K562 (cell line): ENCODE measurements at regions of chr6 and their contacts with region 1.

Region 1: GRCh38 chr6:3638662-3639061 is 112.9 kb downstream of the PXDC1 start:
- DNase-seq: no peak
- ATAC-seq: no peak
- H3K4me3 ChIP-seq: no peak overlapping the region
- H3K27ac ChIP-seq: no peak overlapping the region
- H3K4me1 ChIP-seq: no peaks in the 10 kb centered on the region; a peak in 1 of 5 replicates
- H3K27me3 ChIP-seq: peaks cover 3 to 8% of the 10 kb centered on the region in 2 experiments; a peak in 4 of 5 replicates
- CTCF ChIP-seq: no peak
- EP300 ChIP-seq: no peak
- POLR2A ChIP-seq: no peak
- RAD21 ChIP-seq: no peak

Region 2: GRCh38 chr6:3650959-3651697 is 12.5 kb after region 1 on chr6:
- CTCF ChIA-PET with region 1: no interaction called
- POLR2A ChIA-PET with region 1: interaction called, 10 read pairs
- in situ Hi-C with region 1: no loop called
- intact Hi-C with region 1: no loop called
- DNase-seq: peak; percentile 66 to 96 (median 80)
- ATAC-seq: peak; percentile 96
- H3K4me3 ChIP-seq: peak overlapping the region; percentile 1; the same call in 1 of the 2 replicates
- H3K27ac ChIP-seq: peak overlapping the region; percentile 88
- H3K4me1 ChIP-seq: peaks cover 21 to 26% of the 10 kb centered on the region in 2 experiments
- H3K27me3 ChIP-seq: no peaks in the 10 kb centered on the region
- CTCF ChIP-seq: no peak
- EP300 ChIP-seq: peak; percentile 94
- POLR2A ChIP-seq: peak; percentile 46; the same call in 1 of the 2 replicates
- RAD21 ChIP-seq: no peak; a peak in 1 of 4 replicates

Region 3: GRCh38 chr6:3712827-3713665 is 74.4 kb after region 1 on chr6:
- CTCF ChIA-PET with region 1: no interaction called
- POLR2A ChIA-PET with region 1: no interaction called
- in situ Hi-C with region 1: no loop called
- intact Hi-C with region 1: no loop called
- DNase-seq: no peak
- ATAC-seq: no peak
- H3K4me3 ChIP-seq: no peak overlapping the region
- H3K27ac ChIP-seq: no peak overlapping the region
- H3K4me1 ChIP-seq: peaks cover 0 to under 1% of the 10 kb centered on the region in 2 experiments; a peak in 2 of 5 replicates
- H3K27me3 ChIP-seq: peaks cover 24 to 49% of the 10 kb centered on the region in 2 experiments; a peak in 4 of 5 replicates
- CTCF ChIP-seq: no peak
- EP300 ChIP-seq: no peak
- POLR2A ChIP-seq: no peak
- RAD21 ChIP-seq: no peak

Region 4: GRCh38 chr6:3794092-3794491 is 155.4 kb after region 1 on chr6:
- CTCF ChIA-PET with region 1: no interaction called
- POLR2A ChIA-PET with region 1: no interaction called
- in situ Hi-C with region 1: no loop called
- intact Hi-C with region 1: no loop called
- DNase-seq: no peak
- ATAC-seq: no peak
- H3K4me3 ChIP-seq: no peak overlapping the region
- H3K27ac ChIP-seq: no peak overlapping the region
- H3K4me1 ChIP-seq: no peaks in the 10 kb centered on the region
- H3K27me3 ChIP-seq: peaks cover 22 to 50% of the 10 kb centered on the region in 2 experiments
- CTCF ChIP-seq: no peak
- EP300 ChIP-seq: no peak
- POLR2A ChIP-seq: no peak
- RAD21 ChIP-seq: no peak